ENCODE measurements at regions of chr7 and their contacts with region 1.

Region 1: GRCh38 chr7:30594549-30595435 is at the start of gene GARS1:
- DNase-seq: peak; percentile 93
- H3K4me3 ChIP-seq: peak within 1 kb of the TSS; percentile 73 to 99 (median 96)
- H3K27ac ChIP-seq: peak within 1 kb of the TSS; percentile 86 to 98 (median 96)
- H3K4me1 ChIP-seq: peaks cover 0 to 41% (median 26%) of the 10 kb centered on the region in 4 donors
- H3K27me3 ChIP-seq: no peaks in the 10 kb centered on the region
- CTCF ChIP-seq: no peak
- EP300 ChIP-seq: peak in 3 of 4 donors; percentile 56 to 69 (median 57)
- POLR2A ChIP-seq: peak; percentile 68 to 77
- total RNA-seq, gene GARS1: 38.3 to 50.1 (median 45.2) TPM

Region 2: GRCh38 chr7:30478349-30479201 is 116.2 kb before region 1 on chr7 and contains the start of gene NOD1:
- intact Hi-C with region 1: loop called (anchors 10 kb)
- DNase-seq: peak; percentile 86
- H3K4me3 ChIP-seq: peak within 1 kb of the TSS; percentile 63 to 79 (median 70)
- H3K27ac ChIP-seq: peak within 1 kb of the TSS; percentile 88 to 99 (median 90)
- H3K4me1 ChIP-seq: peaks cover 0 to 44% (median 32%) of the 10 kb centered on the region in 4 donors
- H3K27me3 ChIP-seq: no peaks in the 10 kb centered on the region
- CTCF ChIP-seq: no peak
- EP300 ChIP-seq: peak in 1 of 4 donors; percentile 4
- POLR2A ChIP-seq: peak; percentile 31 to 44
- total RNA-seq, gene NOD1: 5.9 to 17.5 (median 9.3) TPM

Region 3: DNA sequence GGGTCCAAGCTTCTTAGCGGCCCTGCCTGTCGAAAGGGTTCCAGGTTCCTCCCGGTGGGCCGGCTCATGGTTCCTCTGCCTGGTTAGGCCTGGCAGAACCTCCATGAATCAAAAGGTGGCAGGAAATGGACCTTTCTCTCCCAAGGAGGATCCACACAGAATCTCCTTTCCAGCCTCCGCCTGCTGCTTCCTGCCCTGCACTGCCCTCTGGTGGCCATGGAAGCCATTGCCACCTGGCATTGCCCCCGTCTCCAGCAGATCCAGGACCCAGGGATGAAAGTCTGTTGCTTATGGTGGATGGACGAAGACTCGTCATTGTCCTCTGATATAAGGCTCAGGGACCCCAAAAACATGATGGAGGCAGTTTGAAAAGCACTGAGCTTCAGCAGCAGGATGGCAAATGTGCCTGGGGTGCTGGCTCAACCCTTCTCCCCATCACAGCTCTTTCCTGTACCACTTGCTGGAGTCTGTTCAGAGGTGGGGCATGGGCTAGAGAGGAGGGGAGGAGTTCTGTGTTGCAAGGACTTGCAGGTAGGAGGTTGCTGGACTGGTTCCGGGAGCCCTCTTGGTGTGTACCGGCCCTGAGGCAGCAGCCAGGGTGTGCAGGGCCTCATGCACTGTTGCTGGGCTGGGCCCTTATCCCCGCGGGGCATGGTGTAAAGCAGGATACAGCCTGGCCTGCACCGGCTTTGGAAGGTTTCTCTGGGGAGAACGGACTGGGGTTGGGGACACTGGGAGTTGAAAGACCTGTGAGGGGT is 145.8 kb after region 1 on chr7:
- intact Hi-C with region 1: loop called (anchors 10 kb)
- DNase-seq: peak; percentile 83
- H3K4me3 ChIP-seq: no peak overlapping the region
- H3K27ac ChIP-seq: no peak overlapping the region
- H3K4me1 ChIP-seq: peaks cover 0 to 3% (median 0%) of the 10 kb centered on the region in 4 donors
- H3K27me3 ChIP-seq: no peaks in the 10 kb centered on the region
- CTCF ChIP-seq: peak; percentile 80 to 99 (median 96)
- EP300 ChIP-seq: no peak
- POLR2A ChIP-seq: no peak